Left cardiac atrium (tissue), 4 donors: ENCODE measurements at regions of chr9 and their contacts with region 1.

Region 1: GRCh38 chr9:96486368-96487028 is 36.5 kb downstream of the HABP4 start:
- DNase-seq: peak; percentile 60
- ATAC-seq: peak; percentile 76 to 90

Region 2: DNA sequence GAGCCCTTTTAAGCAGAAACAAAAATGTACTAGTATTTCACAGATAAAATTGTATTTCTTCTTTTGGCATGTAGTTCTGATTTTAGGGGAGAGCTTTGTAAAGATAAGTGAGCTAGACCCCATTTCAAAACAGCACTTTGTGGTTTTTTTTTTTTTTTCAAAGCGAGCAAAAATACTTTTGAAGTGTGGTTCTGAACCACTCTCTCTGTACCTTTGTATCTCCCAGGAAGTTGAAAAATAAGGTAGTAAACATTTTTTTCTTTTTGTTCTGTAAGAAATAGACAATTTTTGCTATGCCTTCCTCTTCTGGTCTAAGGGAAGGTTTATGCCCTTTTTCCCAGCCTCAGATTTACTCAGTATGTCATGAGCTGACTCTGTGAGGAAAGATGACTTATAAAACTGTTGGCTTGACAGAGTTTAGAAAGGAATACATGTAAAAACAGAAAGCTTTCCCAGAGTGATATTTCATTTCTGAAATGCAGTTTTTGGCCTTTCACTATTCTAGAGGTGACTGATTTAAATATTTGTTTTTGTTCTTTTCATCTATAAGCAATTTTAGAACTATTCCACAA is 598.5 kb before region 1 on chr9:
- intact Hi-C with region 1: no loop called
- DNase-seq: no peak
- ATAC-seq: no peak

Region 3: DNA sequence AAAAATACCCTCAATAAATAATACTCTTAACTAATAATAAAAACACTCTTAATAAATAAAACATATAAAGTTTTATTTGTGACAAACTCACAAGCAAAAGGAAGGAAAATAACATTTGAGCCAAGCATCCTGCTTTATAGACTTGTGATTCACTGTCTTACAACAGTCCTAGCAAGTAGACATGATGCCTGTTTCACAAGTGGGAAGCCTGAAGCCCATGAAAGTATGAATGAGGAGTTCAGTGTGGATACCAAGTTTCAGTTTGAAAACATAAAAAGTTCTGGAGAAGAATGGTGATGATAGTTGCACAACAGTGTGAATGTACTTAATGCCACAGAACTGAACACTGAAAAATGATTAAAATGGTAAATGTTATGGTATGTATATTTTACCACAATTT is 25.6 kb before region 1 on chr9:
- intact Hi-C with region 1: loop called in 1 of 2 experiments (anchors 1 kb)
- DNase-seq: no peak
- ATAC-seq: no peak